ENCODE measurements at regions of chrX and their contacts with region 1.

Region 1: DNA sequence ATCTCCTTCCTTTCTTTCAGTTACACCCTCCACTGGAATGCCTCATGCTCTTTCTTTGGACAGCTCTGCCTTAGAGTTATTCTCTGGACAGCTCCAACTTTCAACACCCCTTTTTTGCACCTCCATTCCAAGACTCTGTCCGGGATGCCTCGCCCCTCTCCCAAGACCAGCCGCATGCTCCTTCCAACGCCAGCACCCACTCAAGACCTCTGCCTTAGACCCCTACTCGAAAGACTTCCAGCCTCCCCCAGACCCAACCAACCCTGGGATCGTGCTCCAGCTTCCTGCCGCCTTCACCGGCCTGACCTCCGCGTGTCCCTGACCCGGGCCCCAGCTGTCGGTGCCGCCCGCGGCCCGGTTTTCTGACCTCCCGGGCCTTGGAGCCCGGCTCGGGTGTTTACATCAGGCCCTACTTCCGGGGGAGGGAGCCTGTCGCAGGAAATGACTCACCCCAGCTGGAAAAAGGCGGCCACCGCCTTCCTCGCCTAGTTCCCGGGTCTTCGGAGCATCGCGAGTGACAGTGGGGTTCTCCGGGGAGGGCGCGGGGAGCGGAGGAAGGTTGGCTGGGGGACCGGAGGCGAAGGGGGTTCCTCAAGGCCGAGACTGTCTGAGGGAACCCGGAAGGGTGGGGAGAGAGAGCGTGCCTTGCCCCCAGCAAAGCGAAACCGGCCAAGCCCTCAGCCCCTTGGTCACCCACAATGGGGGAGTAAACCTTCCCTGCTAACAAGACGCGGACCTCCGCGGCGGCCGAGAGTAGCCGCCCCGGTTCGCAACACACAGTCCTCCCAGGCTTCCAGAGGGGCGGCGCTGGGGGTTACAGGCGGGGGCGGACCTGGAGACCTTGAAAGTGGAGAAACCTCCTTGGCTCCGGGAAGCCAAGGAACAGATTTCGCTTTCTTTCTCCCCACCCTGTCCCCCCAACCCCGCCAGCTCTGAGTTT is at the start of gene WDR45:
- DNase-seq: peak; percentile 51
- ATAC-seq: peak; percentile 92
- H3K4me3 ChIP-seq: peak within 1 kb of the TSS; percentile 66 to 76 (median 71)
- H3K27ac ChIP-seq: peak within 1 kb of the TSS; percentile 73
- H3K4me1 ChIP-seq: peaks cover 9% of the 10 kb centered on the region; the same call in 1 of the 2 replicates
- H3K27me3 ChIP-seq: no peaks in the 10 kb centered on the region
- CTCF ChIP-seq: no peak
- EP300 ChIP-seq: no peak
- POLR2A ChIP-seq: peak in 1 of 2 experiments; percentile 47; a peak in 3 of 4 replicates
- RAD21 ChIP-seq: no peak
- total RNA-seq, gene WDR45: 14.0 and 16.4 TPM in 2 replicates

Region 2: GRCh38 chrX:49100704-49101628 is 21.2 kb after region 1 on chrX:
- CTCF ChIA-PET with region 1: no interaction called
- POLR2A ChIA-PET with region 1: interaction called, 16 read pairs
- in situ Hi-C with region 1: no loop called
- intact Hi-C with region 1: no loop called
- DNase-seq: peak; percentile 89
- ATAC-seq: peak; percentile 87
- H3K4me3 ChIP-seq: peak overlapping the region; percentile 63 to 86 (median 74)
- H3K27ac ChIP-seq: peak overlapping the region; percentile 94
- H3K4me1 ChIP-seq: peaks cover 29% of the 10 kb centered on the region
- H3K27me3 ChIP-seq: no peaks in the 10 kb centered on the region
- CTCF ChIP-seq: no peak
- EP300 ChIP-seq: no peak
- POLR2A ChIP-seq: peak; percentile 59 to 86
- RAD21 ChIP-seq: no peak

Region 3: DNA sequence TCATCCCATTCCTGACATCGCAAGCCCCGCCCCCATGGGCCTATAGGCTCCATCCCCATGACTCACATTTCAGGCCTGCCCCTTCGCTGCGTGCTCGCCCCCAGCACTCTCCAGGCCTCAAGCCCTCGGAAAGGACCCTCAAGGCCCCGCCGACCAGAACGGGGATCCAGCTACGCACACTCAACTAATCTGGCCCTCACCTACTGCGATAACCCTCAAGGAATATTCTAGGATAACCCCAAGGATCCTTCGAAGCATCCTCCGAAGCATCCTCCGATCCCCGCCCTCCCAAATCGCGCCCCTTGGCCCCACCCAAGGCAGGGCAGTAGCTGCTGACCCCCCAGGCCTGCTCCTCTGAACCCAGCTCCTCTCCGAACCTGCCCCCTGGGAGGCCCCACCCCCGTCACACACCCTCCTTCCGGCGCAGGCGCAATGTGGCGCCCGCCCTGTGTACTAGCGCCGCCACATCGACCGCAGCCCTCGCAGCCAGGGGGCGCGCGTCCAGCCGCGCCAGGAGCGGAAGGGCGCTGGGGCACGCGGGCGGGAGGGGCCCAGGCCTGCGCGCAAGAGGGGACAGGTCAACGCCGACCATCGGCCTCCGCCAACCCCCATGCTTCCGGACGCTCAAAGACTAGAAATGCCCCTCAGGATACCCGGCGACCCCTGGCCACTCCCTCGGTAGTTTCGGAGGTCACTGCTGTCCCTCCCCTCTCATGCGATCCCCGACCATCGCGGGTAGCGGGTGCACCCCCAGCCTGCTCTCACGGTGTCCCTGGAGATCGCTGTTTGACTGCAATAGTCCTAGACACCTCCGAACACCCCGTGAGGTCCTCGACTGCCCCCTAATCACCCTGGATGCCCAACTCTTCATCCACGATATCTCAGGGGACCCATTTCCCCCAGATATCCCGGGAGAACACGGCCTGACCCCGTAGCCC is 76.4 kb after region 1 on chrX:
- CTCF ChIA-PET with region 1: no interaction called
- POLR2A ChIA-PET with region 1: no interaction called
- in situ Hi-C with region 1: no loop called
- intact Hi-C with region 1: no loop called
- DNase-seq: no peak
- ATAC-seq: no peak
- H3K4me3 ChIP-seq: no peak overlapping the region
- H3K27ac ChIP-seq: no peak overlapping the region
- H3K4me1 ChIP-seq: no peaks in the 10 kb centered on the region
- H3K27me3 ChIP-seq: no peaks in the 10 kb centered on the region
- CTCF ChIP-seq: no peak
- EP300 ChIP-seq: no peak
- POLR2A ChIP-seq: no peak
- RAD21 ChIP-seq: no peak